Caco-2 (cell line): ENCODE measurements at regions of chr5 and their contacts with region 1.

Region 1: GRCh38 chr5:56481428-56482357 is 248.6 kb upstream of the ANKRD55 start:
- DNase-seq: peak; percentile 62 to 66
- H3K4me3 ChIP-seq: peak overlapping the region; percentile 56
- H3K4me3 Mint-ChIP-seq: peak overlapping the region; percentile 69
- H3K27ac Mint-ChIP-seq: peak overlapping the region; percentile 71
- H3K4me1 ChIP-seq: peaks cover 40% of the 10 kb centered on the region
- H3K4me1 Mint-ChIP-seq: peaks cover 24% of the 10 kb centered on the region
- H3K27me3 ChIP-seq: no peaks in the 10 kb centered on the region
- H3K27me3 Mint-ChIP-seq: no peaks in the 10 kb centered on the region
- CTCF ChIP-seq: peak in 1 of 2 experiments; percentile 55

Region 2: GRCh38 chr5:56329652-56330051 is 152.0 kb before region 1 on chr5:
- CTCF ChIA-PET with region 1: no interaction called
- POLR2A ChIA-PET with region 1: no interaction called
- intact Hi-C with region 1: no loop called
- DNase-seq: no peak
- H3K4me3 ChIP-seq: no peak overlapping the region
- H3K4me3 Mint-ChIP-seq: no peak overlapping the region
- H3K27ac Mint-ChIP-seq: peak overlapping the region; percentile 75
- H3K4me1 ChIP-seq: peaks cover 64% of the 10 kb centered on the region
- H3K4me1 Mint-ChIP-seq: peaks cover 50% of the 10 kb centered on the region
- H3K27me3 ChIP-seq: no peaks in the 10 kb centered on the region
- H3K27me3 Mint-ChIP-seq: no peaks in the 10 kb centered on the region
- CTCF ChIP-seq: no peak

Region 3: DNA sequence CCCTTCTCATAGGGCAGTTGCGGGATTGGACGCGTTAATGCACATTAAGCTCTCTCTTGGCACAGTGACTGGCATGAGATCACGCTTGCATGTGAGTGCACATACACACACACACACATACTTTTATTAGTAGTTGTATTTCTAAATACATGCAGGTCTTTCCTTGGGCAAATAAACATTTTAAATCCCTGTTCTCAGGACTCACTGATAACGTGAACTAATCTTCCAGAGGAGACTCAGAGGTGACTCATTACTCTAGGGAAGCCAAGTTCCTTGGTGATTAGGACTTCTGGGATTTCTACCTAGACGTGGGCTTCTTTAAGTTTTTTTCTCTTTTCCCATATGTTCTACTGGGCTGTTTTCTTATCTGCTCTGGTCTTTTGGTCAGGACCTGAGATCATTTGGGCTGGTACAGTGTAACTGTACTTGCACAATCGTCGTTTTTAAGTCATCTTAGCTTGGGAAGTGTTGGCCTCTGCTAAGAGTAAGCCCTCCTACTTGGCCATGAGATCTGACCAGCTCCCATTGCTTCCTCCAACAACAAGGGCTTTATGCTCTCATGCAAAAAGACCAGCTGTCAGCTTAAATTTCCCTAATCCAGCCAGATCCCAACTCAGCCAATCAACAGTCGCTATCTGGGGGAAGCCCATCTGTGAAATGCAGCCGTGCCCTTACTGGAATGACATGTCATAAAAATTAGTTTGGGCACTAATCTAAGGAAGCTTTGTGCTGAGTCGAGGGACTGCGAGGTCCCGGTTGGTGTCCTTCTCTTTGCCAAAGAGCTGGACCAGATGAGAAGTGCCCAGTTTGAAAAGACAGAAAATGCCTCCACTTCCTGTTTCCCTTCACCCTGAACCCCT is 72.1 kb before region 1 on chr5:
- CTCF ChIA-PET with region 1: no interaction called
- POLR2A ChIA-PET with region 1: interaction called, 3 read pairs
- intact Hi-C with region 1: loop called (anchors 10 kb)
- DNase-seq: peak; percentile 31 to 62
- H3K4me3 ChIP-seq: no peak overlapping the region
- H3K4me3 Mint-ChIP-seq: peak overlapping the region; percentile 2
- H3K27ac Mint-ChIP-seq: peak overlapping the region; percentile 77
- H3K4me1 ChIP-seq: peaks cover 96% of the 10 kb centered on the region
- H3K4me1 Mint-ChIP-seq: peaks cover 61% of the 10 kb centered on the region
- H3K27me3 ChIP-seq: no peaks in the 10 kb centered on the region
- H3K27me3 Mint-ChIP-seq: no peaks in the 10 kb centered on the region
- CTCF ChIP-seq: no peak

Region 4: GRCh38 chr5:56506211-56506965 is 24.7 kb after region 1 on chr5:
- CTCF ChIA-PET with region 1: no interaction called
- POLR2A ChIA-PET with region 1: no interaction called
- intact Hi-C with region 1: loop called (anchors 1 kb)
- DNase-seq: peak; percentile 78 to 89
- H3K4me3 ChIP-seq: no peak overlapping the region
- H3K4me3 Mint-ChIP-seq: peak overlapping the region; percentile 4
- H3K27ac Mint-ChIP-seq: peak overlapping the region; percentile 35
- H3K4me1 ChIP-seq: peaks cover 69% of the 10 kb centered on the region
- H3K4me1 Mint-ChIP-seq: peaks cover 53% of the 10 kb centered on the region
- H3K27me3 ChIP-seq: no peaks in the 10 kb centered on the region
- H3K27me3 Mint-ChIP-seq: no peaks in the 10 kb centered on the region
- CTCF ChIP-seq: no peak

Region 5: GRCh38 chr5:56529666-56530430 is 48.2 kb after region 1 on chr5:
- CTCF ChIA-PET with region 1: no interaction called
- POLR2A ChIA-PET with region 1: no interaction called
- intact Hi-C with region 1: loop called (anchors 2 kb)
- DNase-seq: no peak
- H3K4me3 ChIP-seq: no peak overlapping the region
- H3K4me3 Mint-ChIP-seq: no peak overlapping the region
- H3K27ac Mint-ChIP-seq: no peak overlapping the region
- H3K4me1 ChIP-seq: peaks cover 81% of the 10 kb centered on the region
- H3K4me1 Mint-ChIP-seq: peaks cover 38% of the 10 kb centered on the region
- H3K27me3 ChIP-seq: no peaks in the 10 kb centered on the region
- H3K27me3 Mint-ChIP-seq: no peaks in the 10 kb centered on the region
- CTCF ChIP-seq: no peak

Region 6: DNA sequence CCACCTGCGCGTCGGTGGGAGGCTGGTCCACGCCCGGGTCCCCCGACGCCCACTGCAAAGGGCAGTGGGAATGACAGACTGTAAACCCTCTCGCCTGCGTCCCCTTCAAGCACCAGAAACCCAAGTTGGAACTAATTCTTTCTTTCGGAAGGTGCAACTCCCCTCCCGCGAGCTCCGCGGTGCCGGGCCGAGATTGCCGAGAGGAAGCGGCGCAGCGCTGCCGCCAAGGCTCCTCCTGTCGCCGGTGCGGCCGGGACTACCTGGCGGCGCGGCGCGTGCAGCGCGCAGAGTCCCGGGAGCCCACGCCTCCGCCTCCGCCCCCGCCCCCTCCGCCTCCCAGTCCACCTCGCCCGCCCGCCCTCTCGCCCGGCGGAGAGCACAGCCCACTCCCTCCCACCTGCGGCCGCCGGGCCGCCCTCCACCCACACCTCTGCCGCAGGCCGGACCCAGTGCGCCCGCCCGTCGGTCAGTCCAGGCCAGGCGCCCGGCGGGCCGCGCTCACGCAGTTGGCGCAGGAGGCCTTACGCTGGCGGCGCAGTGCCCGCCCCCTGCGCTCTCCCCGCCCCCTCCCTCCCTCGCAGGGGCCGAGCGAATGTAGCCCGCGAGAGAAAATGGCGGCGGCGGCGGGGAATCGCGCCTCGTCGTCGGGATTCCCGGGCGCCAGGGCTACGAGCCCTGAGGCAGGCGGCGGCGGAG is 333.4 kb after region 1 on chr5 and contains the start of gene MAP3K1:
- CTCF ChIA-PET with region 1: no interaction called
- POLR2A ChIA-PET with region 1: interaction called, 3 read pairs
- intact Hi-C with region 1: loop called (anchors 5 kb)
- DNase-seq: peak; percentile 95 to 96
- H3K4me3 ChIP-seq: peak within 1 kb of the TSS; percentile 92
- H3K4me3 Mint-ChIP-seq: peak within 1 kb of the TSS; percentile 97
- H3K27ac Mint-ChIP-seq: peak within 1 kb of the TSS; percentile 93
- H3K4me1 ChIP-seq: peaks cover 42% of the 10 kb centered on the region
- H3K4me1 Mint-ChIP-seq: peaks cover 20% of the 10 kb centered on the region
- H3K27me3 ChIP-seq: no peaks in the 10 kb centered on the region
- H3K27me3 Mint-ChIP-seq: no peaks in the 10 kb centered on the region
- CTCF ChIP-seq: no peak
- total RNA-seq, gene MAP3K1: 46.0 and 47.0 TPM in 2 replicates

Region 7: DNA sequence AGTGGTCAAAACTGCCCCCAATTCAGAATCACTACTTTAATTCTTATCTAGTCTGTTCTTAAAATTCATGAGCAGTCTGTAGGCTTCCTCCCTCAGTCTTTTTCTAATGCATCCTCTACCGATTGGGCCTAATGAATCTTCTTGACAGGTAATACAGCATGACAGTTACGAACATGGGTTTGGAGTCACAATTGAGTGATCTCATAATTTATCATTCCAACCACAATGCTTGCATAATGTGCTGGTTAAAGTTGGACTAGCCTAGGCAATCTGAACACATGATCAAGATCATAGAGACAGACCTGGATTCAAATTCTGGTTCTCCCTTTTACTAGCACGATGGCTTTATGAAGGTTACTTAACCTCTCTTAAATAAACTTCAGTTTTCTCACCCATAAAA is 394.6 kb after region 1 on chr5:
- CTCF ChIA-PET with region 1: no interaction called
- POLR2A ChIA-PET with region 1: no interaction called
- intact Hi-C with region 1: no loop called
- DNase-seq: no peak
- H3K4me3 ChIP-seq: no peak overlapping the region
- H3K4me3 Mint-ChIP-seq: no peak overlapping the region
- H3K27ac Mint-ChIP-seq: no peak overlapping the region
- H3K4me1 ChIP-seq: no peaks in the 10 kb centered on the region
- H3K4me1 Mint-ChIP-seq: peaks cover 5% of the 10 kb centered on the region
- H3K27me3 ChIP-seq: no peaks in the 10 kb centered on the region
- H3K27me3 Mint-ChIP-seq: no peaks in the 10 kb centered on the region
- CTCF ChIP-seq: no peak